ENCODE measurements at regions of chr9 and their contacts with region 1.

Region 1: DNA sequence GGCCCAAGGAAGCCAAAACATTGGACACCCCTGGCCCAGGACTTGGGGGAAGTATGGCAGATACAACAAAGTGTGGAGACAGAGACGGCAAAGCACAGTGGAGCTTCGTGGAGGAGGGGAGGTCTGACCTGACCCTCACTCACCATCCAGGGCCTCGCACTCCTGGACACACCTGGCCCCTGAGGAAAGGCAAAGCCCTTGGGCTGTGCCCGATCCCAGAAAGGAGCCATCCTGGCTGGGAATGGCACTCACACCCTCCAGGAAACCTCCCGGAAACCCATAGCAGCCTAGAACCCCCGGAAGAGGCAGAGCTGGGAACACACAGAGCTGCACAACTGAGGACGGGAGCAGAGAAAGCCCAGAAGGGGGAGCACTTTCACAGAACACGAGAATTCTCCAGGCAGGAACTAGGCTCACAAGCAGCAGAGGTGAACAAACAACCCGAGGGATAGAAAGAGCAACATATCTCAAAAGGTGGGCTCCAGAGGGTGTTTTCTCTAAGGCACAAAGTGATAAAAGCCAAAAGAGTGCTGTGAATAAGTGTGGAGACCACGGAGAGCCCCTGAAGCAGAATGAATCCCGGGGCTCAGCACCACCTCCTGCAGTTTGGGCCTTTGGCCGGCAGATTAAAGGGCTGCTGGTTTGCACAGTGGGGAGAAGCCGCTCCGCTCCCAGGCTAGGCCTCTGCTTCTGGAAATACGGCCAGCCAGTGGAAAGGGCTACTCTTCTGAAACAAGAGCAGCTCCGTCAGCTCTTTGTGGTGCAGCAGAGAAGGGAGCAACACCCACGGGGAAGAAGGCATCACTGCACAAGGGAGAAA is 108.2 kb downstream of the UBE2R2 start:
- DNase-seq: peak; percentile 63 to 71
- ATAC-seq: peak; percentile 68 to 80
- H3K4me3 ChIP-seq: no peak overlapping the region
- H3K27ac ChIP-seq: peak overlapping the region in 1 of 2 experiments; percentile 9; a peak in 2 of 6 replicates
- H3K4me1 ChIP-seq: peaks cover 5% of the 10 kb centered on the region; the same call in 1 of the 3 replicates
- CTCF ChIP-seq: peak; percentile 76
- EP300 ChIP-seq: no peak
- POLR2A ChIP-seq: no peak
- RAD21 ChIP-seq: peak; percentile 68 to 80

Region 2: GRCh38 chr9:33778700-33779351 is 146.4 kb before region 1 on chr9:
- CTCF ChIA-PET with region 1: no interaction called
- POLR2A ChIA-PET with region 1: no interaction called
- DNase-seq: peak; percentile 67 to 76
- ATAC-seq: peak; percentile 91 to 93
- H3K4me3 ChIP-seq: no peak overlapping the region
- H3K27ac ChIP-seq: peak overlapping the region; percentile 16 to 76; a peak in 3 of 6 replicates
- H3K4me1 ChIP-seq: peaks cover 40% of the 10 kb centered on the region
- CTCF ChIP-seq: peak; percentile 87
- EP300 ChIP-seq: no peak
- POLR2A ChIP-seq: no peak
- RAD21 ChIP-seq: peak; percentile 81 to 83

Region 3: DNA sequence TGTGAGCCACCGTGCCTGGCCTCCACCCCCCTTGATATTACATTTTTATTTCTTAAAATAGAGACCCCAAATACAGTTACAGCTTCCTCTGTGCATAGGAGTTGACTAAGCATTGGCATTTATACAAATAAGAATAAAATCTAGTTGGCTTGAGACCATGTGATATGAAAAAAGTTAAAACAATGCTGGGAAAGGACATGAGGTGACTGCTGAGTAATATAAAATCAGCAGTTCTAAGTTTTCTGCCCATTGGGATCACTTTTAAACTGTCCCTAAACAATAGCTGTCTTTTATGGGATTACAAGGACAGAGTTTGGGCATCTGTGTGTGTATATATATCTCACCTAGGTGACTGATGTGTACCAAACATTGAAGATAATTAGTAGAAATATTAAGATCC is 11.6 kb before region 1 on chr9:
- CTCF ChIA-PET with region 1: interaction called, 43 read pairs
- POLR2A ChIA-PET with region 1: no interaction called
- DNase-seq: no peak
- ATAC-seq: no peak
- H3K4me3 ChIP-seq: no peak overlapping the region
- H3K27ac ChIP-seq: no peak overlapping the region
- H3K4me1 ChIP-seq: no peaks in the 10 kb centered on the region
- CTCF ChIP-seq: no peak
- EP300 ChIP-seq: no peak
- POLR2A ChIP-seq: no peak
- RAD21 ChIP-seq: no peak

Region 4: GRCh38 chr9:33939924-33940874 is 15.0 kb after region 1 on chr9:
- CTCF ChIA-PET with region 1: interaction called, 117 read pairs
- POLR2A ChIA-PET with region 1: no interaction called
- DNase-seq: peak in 1 of 2 experiments; percentile 67
- ATAC-seq: peak; percentile 68 to 73
- H3K4me3 ChIP-seq: no peak overlapping the region
- H3K27ac ChIP-seq: peak overlapping the region; percentile 61 to 75
- H3K4me1 ChIP-seq: peaks cover 45% of the 10 kb centered on the region
- CTCF ChIP-seq: no peak
- EP300 ChIP-seq: no peak
- POLR2A ChIP-seq: no peak
- RAD21 ChIP-seq: no peak

Region 5: GRCh38 chr9:34025062-34025461 is 99.9 kb after region 1 on chr9:
- CTCF ChIA-PET with region 1: interaction called, 13 read pairs
- POLR2A ChIA-PET with region 1: no interaction called
- DNase-seq: no peak
- ATAC-seq: no peak
- H3K4me3 ChIP-seq: no peak overlapping the region
- H3K27ac ChIP-seq: no peak overlapping the region
- H3K4me1 ChIP-seq: no peaks in the 10 kb centered on the region
- CTCF ChIP-seq: no peak
- EP300 ChIP-seq: no peak
- POLR2A ChIP-seq: no peak
- RAD21 ChIP-seq: no peak

Measured in A549 (cell line).